ENCODE measurements at regions of chr16 and their contacts with region 1.

Region 1: DNA sequence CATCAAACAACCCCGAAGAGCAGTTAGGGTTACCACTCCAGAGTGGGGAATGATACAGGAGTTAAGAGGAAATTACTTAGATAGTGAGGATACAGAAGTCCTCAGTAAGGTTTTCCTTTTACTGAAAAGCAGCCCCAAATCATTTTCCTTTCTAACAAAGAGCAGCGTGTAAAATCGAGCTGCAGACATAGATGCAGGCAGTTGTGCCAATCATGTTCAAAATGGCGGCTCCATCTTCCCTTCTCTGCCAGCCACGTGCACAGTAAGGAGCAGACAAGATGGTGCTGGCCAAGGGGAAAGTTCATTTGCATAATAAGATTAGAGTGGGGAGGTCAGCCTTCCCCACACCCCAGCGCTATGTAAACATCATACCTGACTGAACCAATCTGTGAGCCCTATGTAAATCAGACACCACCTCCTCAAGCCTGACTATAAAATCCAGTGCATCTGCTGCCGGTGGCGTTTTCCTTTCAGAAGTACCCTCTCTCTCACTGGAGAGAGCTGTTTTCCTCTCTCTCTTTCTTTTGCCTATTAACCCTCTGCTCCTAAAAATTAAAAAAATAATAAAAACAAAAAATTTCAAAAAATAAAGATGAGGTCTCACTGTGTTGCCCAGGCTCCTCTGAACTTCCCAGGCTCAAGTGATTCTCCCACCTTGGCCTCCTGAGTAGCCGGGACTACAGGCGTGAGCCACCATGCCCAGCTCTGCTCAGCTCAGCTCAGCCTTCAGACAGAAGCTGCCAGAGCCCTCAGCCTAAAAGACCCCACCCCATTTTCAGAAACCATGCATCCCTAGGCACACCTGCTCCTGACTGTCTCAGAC is 2.6 kb upstream of the SRL start:
- DNase-seq: no peak
- ATAC-seq: no peak
- H3K4me3 ChIP-seq: no peak overlapping the region
- H3K27ac ChIP-seq: no peak overlapping the region
- H3K4me1 ChIP-seq: peaks cover 9% of the 10 kb centered on the region
- H3K27me3 ChIP-seq: no peaks in the 10 kb centered on the region
- CTCF ChIP-seq: no peak

Region 2: GRCh38 chr16:4208341-4208751 is 36.1 kb before region 1 on chr16:
- intact Hi-C with region 1: loop called in 1 of 2 experiments (anchors 5 kb)
- DNase-seq: peak; percentile 74 to 82
- ATAC-seq: peak; percentile 50 to 65 (median 52)
- H3K4me3 ChIP-seq: peak overlapping the region; percentile 53
- H3K27ac ChIP-seq: peak overlapping the region; percentile 82
- H3K4me1 ChIP-seq: peaks cover 82% of the 10 kb centered on the region
- H3K27me3 ChIP-seq: no peaks in the 10 kb centered on the region
- CTCF ChIP-seq: no peak

Measured in psoas muscle (tissue), 8 donors.